ENCODE measurements at regions of chr6 and their contacts with region 1.

Region 1: GRCh38 chr6:169723200-169723909 is 945 bp downstream of the PHF10 start:
- DNase-seq: peak; percentile 74 to 86 (median 82)
- H3K4me3 ChIP-seq: peak overlapping the region; percentile 77
- H3K27ac ChIP-seq: peak overlapping the region; percentile 56 to 96
- H3K4me1 ChIP-seq: peaks cover 3% of the 10 kb centered on the region
- H3K27me3 ChIP-seq: no peaks in the 10 kb centered on the region
- CTCF ChIP-seq: no peak
- EP300 ChIP-seq: no peak
- POLR2A ChIP-seq: no peak

Region 2: DNA sequence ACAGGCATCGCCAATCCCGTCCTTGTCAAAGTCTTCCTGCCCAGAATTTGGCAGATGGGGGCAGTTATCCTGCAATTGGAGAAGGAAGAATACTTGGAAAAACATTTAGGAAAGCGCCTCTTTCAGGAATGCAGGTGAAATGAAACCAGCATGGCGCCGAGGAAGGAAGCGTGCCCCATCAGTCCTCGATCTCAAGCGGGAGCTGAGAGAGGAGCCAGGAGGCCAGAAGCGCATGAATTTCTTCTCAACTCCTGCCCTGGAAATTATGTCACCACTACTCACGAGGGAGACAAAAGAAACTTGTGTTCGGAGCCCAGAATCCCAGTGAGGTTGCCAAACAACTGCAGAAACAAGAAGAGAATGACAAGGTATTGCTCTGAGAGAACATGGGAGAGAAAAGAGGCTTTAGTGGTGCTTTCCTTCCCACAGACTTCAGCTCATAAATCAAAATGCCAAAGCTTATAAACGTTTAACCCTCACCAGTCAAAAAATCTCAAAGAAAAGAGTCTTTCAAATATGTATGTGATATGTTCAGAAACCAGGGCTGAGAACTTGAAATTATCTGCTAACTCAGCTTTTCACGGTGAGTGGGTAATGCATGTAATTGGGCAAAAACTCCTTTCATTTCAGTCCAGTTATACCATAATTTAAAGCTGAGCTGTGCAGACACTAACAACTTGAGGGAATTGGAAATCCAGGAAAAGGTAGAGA is 493.6 kb before region 1 on chr6:
- intact Hi-C with region 1: loop called in 1 of 4 experiments (anchors 10 kb)
- DNase-seq: peak in 2 of 5 donors; percentile 13 to 14
- H3K4me3 ChIP-seq: no peak overlapping the region
- H3K27ac ChIP-seq: no peak overlapping the region
- H3K4me1 ChIP-seq: peaks cover 13% of the 10 kb centered on the region
- H3K27me3 ChIP-seq: no peaks in the 10 kb centered on the region
- CTCF ChIP-seq: no peak
- EP300 ChIP-seq: no peak
- POLR2A ChIP-seq: no peak

Measured in ovary (tissue), 10 donors.